CD14-positive monocyte (primary cell): ENCODE measurements at regions of chr15 and their contacts with region 1.

Region 1: GRCh38 chr15:61834076-61834697 is 226.1 kb downstream of the VPS13C start:
- DNase-seq: peak; percentile 34 to 53 (median 50)
- H3K4me3 ChIP-seq: no peak overlapping the region
- H3K4me3 Mint-ChIP-seq: peak overlapping the region in 1 of 2 donors; percentile 70
- H3K27ac ChIP-seq: no peak overlapping the region
- H3K27ac Mint-ChIP-seq: no peak overlapping the region
- H3K4me1 ChIP-seq: peaks cover 10 to 12% of the 10 kb centered on the region in 2 donors
- H3K4me1 Mint-ChIP-seq: peaks cover 23% of the 10 kb centered on the region
- H3K27me3 ChIP-seq: peaks cover 0 to 9% of the 10 kb centered on the region in 2 donors
- H3K27me3 Mint-ChIP-seq: peaks cover 3 to 18% (median 10%) of the 10 kb centered on the region in 3 donors
- CTCF ChIP-seq: peak; percentile 96

Region 2: DNA sequence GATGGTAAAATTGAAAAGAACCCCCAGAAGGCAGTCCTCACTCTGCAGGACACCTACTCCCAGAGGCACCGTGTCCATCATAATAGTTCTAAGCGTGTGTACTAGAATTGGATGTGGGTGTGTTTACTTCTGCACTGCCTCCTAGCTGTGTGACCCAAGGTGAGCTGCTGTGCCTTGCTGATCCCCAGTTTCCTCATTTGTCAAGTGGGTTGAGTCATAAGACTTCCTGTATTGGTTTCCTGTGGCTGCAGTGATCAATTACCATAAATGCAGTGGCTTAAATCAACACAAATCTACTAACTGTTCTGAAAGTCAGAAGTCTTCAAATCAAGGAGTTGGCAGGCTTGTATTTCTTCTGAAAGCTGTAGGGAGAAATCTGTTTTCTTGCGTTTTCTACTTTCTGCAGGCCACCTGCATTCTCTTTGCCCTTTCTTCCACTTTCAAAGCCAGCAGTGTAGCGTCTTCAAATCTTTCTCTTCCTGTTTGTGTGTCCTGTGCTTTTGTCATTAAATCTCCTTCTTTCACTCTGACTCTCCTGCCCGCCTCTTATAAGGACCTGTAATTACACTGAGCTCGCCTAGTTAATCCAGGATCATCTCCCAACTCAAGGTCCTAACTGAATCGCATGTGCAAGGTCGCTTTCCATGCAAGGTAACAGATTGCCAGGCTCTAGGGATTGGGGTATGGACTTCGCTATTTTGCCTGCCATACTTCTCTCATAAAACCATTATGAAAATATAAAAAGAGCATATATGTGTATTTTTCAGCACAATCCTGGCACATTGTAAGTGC is 664.1 kb before region 1 on chr15:
- intact Hi-C with region 1: loop called in 1 of 2 experiments (anchors 10 kb)
- DNase-seq: no peak
- H3K4me3 ChIP-seq: no peak overlapping the region
- H3K4me3 Mint-ChIP-seq: no peak overlapping the region
- H3K27ac ChIP-seq: no peak overlapping the region
- H3K27ac Mint-ChIP-seq: no peak overlapping the region
- H3K4me1 ChIP-seq: peaks cover 0 to 4% of the 10 kb centered on the region in 2 donors
- H3K4me1 Mint-ChIP-seq: peaks cover 9% of the 10 kb centered on the region
- H3K27me3 ChIP-seq: no peaks in the 10 kb centered on the region
- H3K27me3 Mint-ChIP-seq: peaks cover 2 to 4% (median 4%) of the 10 kb centered on the region in 3 donors
- CTCF ChIP-seq: no peak